ENCODE measurements at regions of chr10 and their contacts with region 1.

Region 1: GRCh38 chr10:63376560-63377304 is 89.0 kb downstream of the JMJD1C start:
- DNase-seq: no peak
- ATAC-seq: no peak
- H3K4me3 Mint-ChIP-seq: no peak overlapping the region
- H3K27ac Mint-ChIP-seq: no peak overlapping the region
- H3K4me1 Mint-ChIP-seq: peaks cover 19% of the 10 kb centered on the region
- H3K27me3 Mint-ChIP-seq: no peaks in the 10 kb centered on the region
- CTCF ChIP-seq: no peak

Region 2: DNA sequence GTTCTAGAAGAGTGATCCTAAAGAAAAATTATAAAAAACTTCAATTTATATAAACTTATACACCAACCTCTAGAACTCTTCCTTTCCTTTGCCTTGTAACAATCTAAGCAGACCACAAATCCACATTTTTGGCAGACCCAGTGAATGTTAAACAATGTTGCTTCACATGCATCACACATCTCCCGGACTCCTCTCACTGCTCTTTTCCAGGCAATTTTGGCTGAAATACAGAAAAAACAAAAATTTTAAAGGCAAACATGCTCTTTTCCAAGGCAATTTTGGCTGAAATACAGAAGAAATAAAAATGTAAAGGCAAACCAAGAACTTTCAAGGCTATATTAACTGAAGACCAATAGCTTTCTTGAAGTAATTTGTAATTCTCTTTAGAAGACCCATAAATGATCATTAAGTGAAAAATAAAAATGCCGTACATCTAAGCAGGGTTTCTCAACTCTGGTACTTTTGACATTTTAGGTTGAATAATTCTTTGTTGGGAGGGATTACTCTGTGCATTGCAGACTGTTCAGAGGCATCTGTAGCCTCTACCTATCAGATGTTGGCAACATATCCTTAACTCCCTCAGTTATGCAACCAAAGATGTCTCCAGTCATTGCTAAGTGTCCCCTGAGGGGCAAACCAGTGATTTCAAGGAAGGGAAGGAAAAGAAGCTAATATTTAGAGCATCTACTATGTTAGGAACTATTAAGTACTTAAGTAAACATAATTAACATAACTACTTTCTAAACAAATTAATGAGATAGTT is 179.2 kb before region 1 on chr10:
- CTCF ChIA-PET with region 1: no interaction called
- POLR2A ChIA-PET with region 1: no interaction called
- intact Hi-C with region 1: no loop called
- DNase-seq: no peak
- ATAC-seq: no peak
- H3K4me3 Mint-ChIP-seq: no peak overlapping the region
- H3K27ac Mint-ChIP-seq: no peak overlapping the region
- H3K4me1 Mint-ChIP-seq: no peaks in the 10 kb centered on the region
- H3K27me3 Mint-ChIP-seq: no peaks in the 10 kb centered on the region
- CTCF ChIP-seq: no peak

Region 3: DNA sequence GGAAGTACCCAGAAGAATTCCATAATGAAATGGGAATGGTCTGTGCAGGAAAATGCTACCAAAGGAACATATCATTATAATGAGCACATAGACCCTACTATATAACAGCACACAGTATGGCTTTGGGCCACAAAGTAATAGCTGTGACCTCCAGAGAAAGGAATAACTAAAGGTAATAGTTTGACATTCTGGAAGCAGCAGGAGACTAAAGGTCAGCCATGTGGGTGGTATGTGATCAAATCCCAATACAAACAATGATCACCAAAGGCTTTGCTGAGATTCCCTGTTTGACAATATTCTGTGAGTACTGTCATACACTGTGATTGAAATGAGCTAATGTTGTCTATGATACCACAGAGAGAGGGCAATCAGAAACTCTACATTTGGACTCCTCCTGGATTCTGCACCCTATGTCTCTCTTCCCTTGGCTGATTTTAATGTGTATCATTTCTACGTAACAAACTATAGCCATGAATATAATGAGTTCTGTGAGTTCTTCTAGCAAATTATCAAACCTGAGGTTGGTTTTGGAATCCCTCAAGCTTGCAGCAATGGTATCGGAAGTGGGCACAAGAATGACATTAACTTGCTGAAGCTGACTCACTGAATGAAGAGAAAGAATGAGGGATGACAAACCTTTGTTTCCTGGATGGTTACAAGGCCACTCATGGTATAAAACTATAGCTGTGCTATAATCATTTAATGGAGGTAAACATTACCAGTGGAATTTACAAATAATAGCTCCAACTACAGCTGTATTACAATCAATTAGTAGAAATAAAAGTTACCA is 10.6 kb before region 1 on chr10:
- CTCF ChIA-PET with region 1: interaction called, 12 read pairs
- POLR2A ChIA-PET with region 1: interaction called, 3 read pairs
- intact Hi-C with region 1: no loop called
- DNase-seq: no peak
- ATAC-seq: no peak
- H3K4me3 Mint-ChIP-seq: no peak overlapping the region
- H3K27ac Mint-ChIP-seq: no peak overlapping the region
- H3K4me1 Mint-ChIP-seq: no peaks in the 10 kb centered on the region
- H3K27me3 Mint-ChIP-seq: no peaks in the 10 kb centered on the region
- CTCF ChIP-seq: no peak

Measured in activated CD8-positive, alpha-beta T cell treated with anti-CD3 and anti-CD28 coated beads for 36 hours (primary cell).